HCT116 (cell line): ENCODE measurements at regions of chr1 and their contacts with region 1.

Region 1: GRCh38 chr1:84781946-84782771 is 91.9 kb upstream of the SSX2IP start:
- DNase-seq: peak; percentile 65
- ATAC-seq: peak; percentile 99
- H3K4me3 ChIP-seq: peak overlapping the region in 1 of 2 experiments; percentile 33; a peak in 1 of 4 replicates
- H3K27ac ChIP-seq: no peak overlapping the region
- H3K4me1 ChIP-seq: peaks cover 0 to 9% of the 10 kb centered on the region in 2 experiments; a peak in 3 of 4 replicates
- H3K27me3 ChIP-seq: no peaks in the 10 kb centered on the region
- CTCF ChIP-seq: peak; percentile 78 to 96 (median 95)
- POLR2A ChIP-seq: no peak
- RAD21 ChIP-seq: peak; percentile 62

Region 2: GRCh38 chr1:84260864-84261518 is 521.2 kb before region 1 on chr1:
- CTCF ChIA-PET with region 1: no interaction called
- POLR2A ChIA-PET with region 1: no interaction called
- RAD21 ChIA-PET with region 1: no interaction called
- intact Hi-C with region 1: no loop called
- DNase-seq: no peak
- ATAC-seq: peak; percentile 35; the same call in 1 of the 2 replicates
- H3K4me3 ChIP-seq: no peak overlapping the region
- H3K27ac ChIP-seq: peak overlapping the region; percentile 31
- H3K4me1 ChIP-seq: peaks cover 9 to 15% of the 10 kb centered on the region in 2 experiments
- H3K27me3 ChIP-seq: no peaks in the 10 kb centered on the region
- CTCF ChIP-seq: no peak
- POLR2A ChIP-seq: no peak
- RAD21 ChIP-seq: no peak

Region 3: GRCh38 chr1:84795966-84796600 is 13.9 kb after region 1 on chr1:
- CTCF ChIA-PET with region 1: interaction called, 10 read pairs
- POLR2A ChIA-PET with region 1: no interaction called
- RAD21 ChIA-PET with region 1: no interaction called
- intact Hi-C with region 1: no loop called
- DNase-seq: no peak
- ATAC-seq: no peak
- H3K4me3 ChIP-seq: no peak overlapping the region
- H3K27ac ChIP-seq: no peak overlapping the region
- H3K4me1 ChIP-seq: no peaks in the 10 kb centered on the region
- H3K27me3 ChIP-seq: no peaks in the 10 kb centered on the region
- CTCF ChIP-seq: no peak
- POLR2A ChIP-seq: no peak
- RAD21 ChIP-seq: no peak

Region 4: GRCh38 chr1:84803604-84804003 is 21.4 kb after region 1 on chr1:
- CTCF ChIA-PET with region 1: interaction called, 13 read pairs
- POLR2A ChIA-PET with region 1: no interaction called
- RAD21 ChIA-PET with region 1: no interaction called
- intact Hi-C with region 1: no loop called
- DNase-seq: no peak
- ATAC-seq: no peak
- H3K4me3 ChIP-seq: no peak overlapping the region
- H3K27ac ChIP-seq: no peak overlapping the region
- H3K4me1 ChIP-seq: no peaks in the 10 kb centered on the region
- H3K27me3 ChIP-seq: no peaks in the 10 kb centered on the region
- CTCF ChIP-seq: no peak
- POLR2A ChIP-seq: no peak
- RAD21 ChIP-seq: no peak

Region 5: DNA sequence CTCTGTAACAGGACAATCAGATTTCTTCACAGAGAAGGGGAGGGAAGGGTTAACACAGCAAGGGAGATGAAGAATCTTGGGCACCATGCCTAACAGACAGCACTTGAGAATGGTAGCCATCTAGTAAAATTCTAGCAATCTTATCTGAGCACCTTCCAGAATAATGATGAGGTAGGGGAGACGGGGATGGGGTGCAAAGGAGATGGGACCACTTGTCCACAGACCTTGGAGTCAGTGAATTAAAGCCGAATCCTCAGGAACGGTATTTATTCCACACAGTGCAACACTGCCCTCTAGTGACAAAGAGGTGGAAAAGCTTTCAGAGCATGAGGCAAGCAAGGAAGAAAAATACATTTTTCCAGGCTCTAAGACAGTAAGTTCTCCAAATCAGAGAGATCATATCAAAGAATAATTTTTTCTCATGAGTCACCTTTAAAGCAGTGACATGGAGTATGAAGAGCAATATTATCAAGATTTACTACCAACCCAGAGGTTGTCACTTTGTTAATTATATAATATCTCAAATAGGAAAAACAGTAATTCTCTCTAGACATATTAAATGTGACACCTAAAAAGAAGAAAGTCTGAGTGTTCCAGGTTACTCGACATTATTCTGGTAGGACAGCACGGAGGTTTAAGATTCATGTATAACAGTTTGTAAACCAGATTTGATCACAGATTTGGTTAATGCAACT is 154.1 kb after region 1 on chr1:
- CTCF ChIA-PET with region 1: interaction called, 18 read pairs
- POLR2A ChIA-PET with region 1: no interaction called
- RAD21 ChIA-PET with region 1: interaction called in 1 of 2 experiments, 3 read pairs
- intact Hi-C with region 1: loop called (anchors 2 kb)
- DNase-seq: peak; percentile 39
- ATAC-seq: peak; percentile 83
- H3K4me3 ChIP-seq: no peak overlapping the region
- H3K27ac ChIP-seq: no peak overlapping the region
- H3K4me1 ChIP-seq: no peaks in the 10 kb centered on the region
- H3K27me3 ChIP-seq: no peaks in the 10 kb centered on the region
- CTCF ChIP-seq: peak; percentile 71 to 95 (median 90); a peak in 5 of 6 replicates
- POLR2A ChIP-seq: no peak
- RAD21 ChIP-seq: peak; percentile 92